ENCODE measurements at regions of chr1 and their contacts with region 1.

Region 1: DNA sequence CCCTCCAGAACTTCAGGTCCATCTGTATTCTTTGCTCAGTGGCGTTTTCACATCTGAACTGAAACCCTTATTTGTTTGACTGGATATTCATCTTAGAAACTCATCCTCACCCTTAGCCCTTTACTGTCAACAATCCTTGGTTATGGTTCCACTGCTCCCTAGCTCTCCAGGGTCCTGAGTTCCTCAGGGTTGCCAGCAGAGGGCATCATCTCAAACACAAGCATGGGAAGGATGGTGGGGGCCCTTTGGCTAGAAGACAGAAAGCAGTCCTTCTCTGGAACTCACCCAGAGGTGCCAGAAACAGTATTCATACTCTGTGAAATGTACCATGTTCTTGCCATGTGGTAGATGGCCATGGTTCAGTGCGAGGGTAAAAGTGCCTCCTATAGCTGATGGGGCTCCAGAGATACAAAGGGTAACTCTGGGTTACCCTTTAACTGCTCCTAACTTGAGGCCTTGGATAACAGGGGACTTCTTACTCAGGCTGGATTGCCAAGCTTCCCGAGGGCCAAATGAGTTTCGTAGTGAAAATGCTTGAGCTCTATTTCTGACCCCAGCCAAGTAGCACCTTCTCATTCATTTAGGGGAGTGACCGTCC is 11.3 kb downstream of the NCSTN start:
- DNase-seq: peak; percentile 49
- ATAC-seq: peak; percentile 94
- H3K4me3 Mint-ChIP-seq: no peak overlapping the region
- H3K27ac Mint-ChIP-seq: no peak overlapping the region
- H3K4me1 Mint-ChIP-seq: no peaks in the 10 kb centered on the region
- H3K27me3 Mint-ChIP-seq: no peaks in the 10 kb centered on the region
- CTCF ChIP-seq: peak; percentile 25; the same call in 1 of the 2 replicates

Region 2: GRCh38 chr1:160300173-160300572 is 54.3 kb before region 1 on chr1:
- CTCF ChIA-PET with region 1: no interaction called
- POLR2A ChIA-PET with region 1: no interaction called
- DNase-seq: no peak
- ATAC-seq: no peak
- H3K4me3 Mint-ChIP-seq: no peak overlapping the region
- H3K27ac Mint-ChIP-seq: no peak overlapping the region
- H3K4me1 Mint-ChIP-seq: no peaks in the 10 kb centered on the region
- H3K27me3 Mint-ChIP-seq: no peaks in the 10 kb centered on the region
- CTCF ChIP-seq: no peak

Region 3: DNA sequence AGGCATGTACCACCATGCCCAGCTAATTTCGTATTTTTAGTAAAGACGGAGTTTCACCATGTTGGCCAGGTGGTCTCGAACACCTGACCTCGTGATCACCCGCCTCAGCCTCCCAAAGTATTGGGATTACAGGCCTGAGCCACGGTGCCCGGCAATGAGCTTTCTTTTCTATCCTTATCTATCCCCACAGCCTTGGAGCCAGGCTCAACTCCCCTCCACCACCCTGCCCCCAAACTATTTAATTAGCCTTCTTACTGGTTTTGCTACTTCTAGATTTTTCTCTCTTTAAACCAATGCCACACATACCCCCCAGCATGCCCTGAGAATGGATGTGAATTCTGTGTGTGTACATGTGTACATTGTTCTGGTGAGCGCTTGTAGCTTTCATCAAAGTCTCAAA is 40.2 kb after region 1 on chr1:
- CTCF ChIA-PET with region 1: interaction called, 12 read pairs
- POLR2A ChIA-PET with region 1: no interaction called
- DNase-seq: no peak
- ATAC-seq: no peak
- H3K4me3 Mint-ChIP-seq: no peak overlapping the region
- H3K27ac Mint-ChIP-seq: no peak overlapping the region
- H3K4me1 Mint-ChIP-seq: peaks cover 16% of the 10 kb centered on the region
- H3K27me3 Mint-ChIP-seq: peaks cover 2% of the 10 kb centered on the region; the same call in 1 of the 2 replicates
- CTCF ChIP-seq: no peak

Region 4: GRCh38 chr1:160410406-160411005 is 56.0 kb after region 1 on chr1:
- CTCF ChIA-PET with region 1: interaction called, 10 read pairs
- POLR2A ChIA-PET with region 1: no interaction called
- DNase-seq: peak; percentile 38
- ATAC-seq: peak; percentile 64
- H3K4me3 Mint-ChIP-seq: no peak overlapping the region
- H3K27ac Mint-ChIP-seq: peak overlapping the region; percentile 83
- H3K4me1 Mint-ChIP-seq: peaks cover 77% of the 10 kb centered on the region
- H3K27me3 Mint-ChIP-seq: no peaks in the 10 kb centered on the region
- CTCF ChIP-seq: no peak

Measured in WTC11 (cell line).